A549 (cell line): ENCODE measurements at regions of chr20 and their contacts with region 1.

Region 1: DNA sequence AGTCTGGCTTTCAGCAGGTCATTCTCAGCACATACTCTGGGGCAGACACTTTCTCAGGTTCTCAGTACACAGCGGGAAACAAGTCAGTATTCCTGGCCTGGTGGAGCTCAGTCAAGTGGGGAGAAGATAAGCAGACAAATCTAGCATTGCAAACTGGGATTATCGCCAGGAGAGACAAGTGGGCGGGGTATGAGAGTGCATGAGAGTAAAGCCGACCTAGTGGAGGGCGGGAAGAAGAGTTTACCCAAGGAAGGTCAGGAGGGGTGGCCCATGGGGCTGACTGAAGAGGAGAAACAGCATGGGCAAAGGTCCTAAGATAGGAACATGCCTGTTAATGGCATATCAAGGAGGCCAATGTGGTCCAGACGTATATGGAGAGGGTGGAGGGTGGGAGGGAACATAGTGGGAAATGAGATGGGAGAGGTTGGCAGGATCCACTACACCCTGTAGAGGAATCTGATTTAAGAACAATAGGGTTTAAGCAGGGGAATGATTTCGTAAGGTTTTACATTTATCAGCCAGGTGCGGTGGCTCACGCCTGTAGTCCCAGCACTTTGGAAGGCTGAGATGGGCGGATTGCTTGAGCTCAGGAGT is 12.4 kb upstream of the CSNK2A1 start:
- DNase-seq: no peak
- ATAC-seq: no peak; a peak in 2 of 6 replicates
- H3K4me3 ChIP-seq: no peak overlapping the region
- H3K27ac ChIP-seq: no peak overlapping the region
- H3K4me1 ChIP-seq: peaks cover 16% of the 10 kb centered on the region; the same call in 2 of the 3 replicates
- CTCF ChIP-seq: no peak
- EP300 ChIP-seq: no peak
- POLR2A ChIP-seq: no peak
- RAD21 ChIP-seq: no peak

Region 2: DNA sequence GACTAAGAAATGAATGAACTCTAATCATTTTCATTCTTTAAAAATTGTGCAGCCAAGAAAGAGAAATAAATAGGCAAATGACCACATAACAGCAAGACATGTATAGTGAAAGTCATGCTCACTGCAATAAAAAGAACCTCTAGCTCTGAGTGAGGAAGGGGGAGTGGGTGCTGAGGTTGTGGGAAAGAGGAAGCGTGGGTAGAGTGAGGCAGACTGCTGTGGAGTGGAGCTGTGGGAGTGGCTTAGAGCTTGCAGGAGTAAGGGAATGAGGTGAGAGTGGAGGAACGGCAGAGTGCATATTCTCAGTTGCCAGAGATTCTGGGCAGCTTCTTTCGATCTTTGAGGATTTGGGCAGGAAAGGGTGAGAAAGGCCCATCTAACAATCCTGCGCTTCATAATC is 318.5 kb before region 1 on chr20:
- CTCF ChIA-PET with region 1: no interaction called
- POLR2A ChIA-PET with region 1: no interaction called
- DNase-seq: no peak
- ATAC-seq: no peak
- H3K4me3 ChIP-seq: no peak overlapping the region
- H3K27ac ChIP-seq: no peak overlapping the region
- H3K4me1 ChIP-seq: no peaks in the 10 kb centered on the region
- CTCF ChIP-seq: no peak
- EP300 ChIP-seq: no peak
- POLR2A ChIP-seq: no peak
- RAD21 ChIP-seq: no peak

Region 3: GRCh38 chr20:513429-513828 is 42.6 kb before region 1 on chr20:
- CTCF ChIA-PET with region 1: no interaction called
- POLR2A ChIA-PET with region 1: no interaction called
- DNase-seq: no peak
- ATAC-seq: no peak
- H3K4me3 ChIP-seq: no peak overlapping the region
- H3K27ac ChIP-seq: no peak overlapping the region
- H3K4me1 ChIP-seq: peaks cover 43% of the 10 kb centered on the region
- CTCF ChIP-seq: no peak
- EP300 ChIP-seq: no peak
- POLR2A ChIP-seq: no peak
- RAD21 ChIP-seq: no peak

Region 4: GRCh38 chr20:621125-621756 is 65.2 kb after region 1 on chr20:
- CTCF ChIA-PET with region 1: interaction called, 9 read pairs
- POLR2A ChIA-PET with region 1: interaction called, 12 read pairs
- DNase-seq: no peak
- ATAC-seq: peak; percentile 23 to 42; a peak in 3 of 6 replicates
- H3K4me3 ChIP-seq: no peak overlapping the region
- H3K27ac ChIP-seq: no peak overlapping the region
- H3K4me1 ChIP-seq: no peaks in the 10 kb centered on the region
- CTCF ChIP-seq: no peak
- EP300 ChIP-seq: no peak
- POLR2A ChIP-seq: no peak
- RAD21 ChIP-seq: no peak

Region 5: GRCh38 chr20:868279-868678 is 312.2 kb after region 1 on chr20:
- CTCF ChIA-PET with region 1: no interaction called
- POLR2A ChIA-PET with region 1: no interaction called
- DNase-seq: no peak
- ATAC-seq: no peak
- H3K4me3 ChIP-seq: no peak overlapping the region
- H3K27ac ChIP-seq: no peak overlapping the region
- H3K4me1 ChIP-seq: no peaks in the 10 kb centered on the region
- CTCF ChIP-seq: no peak
- EP300 ChIP-seq: no peak
- POLR2A ChIP-seq: no peak
- RAD21 ChIP-seq: no peak

Region 6: GRCh38 chr20:1033751-1034414 is 477.9 kb after region 1 on chr20:
- CTCF ChIA-PET with region 1: no interaction called
- POLR2A ChIA-PET with region 1: no interaction called
- DNase-seq: no peak
- ATAC-seq: no peak
- H3K4me3 ChIP-seq: no peak overlapping the region
- H3K27ac ChIP-seq: no peak overlapping the region
- H3K4me1 ChIP-seq: no peaks in the 10 kb centered on the region
- CTCF ChIP-seq: no peak
- EP300 ChIP-seq: no peak
- POLR2A ChIP-seq: no peak
- RAD21 ChIP-seq: no peak